MCF 10A (cell line): ENCODE measurements at regions of chr14 and their contacts with region 1.

Region 1: GRCh38 chr14:61573748-61574513 is 121.4 kb upstream of the HIF1A start:
- DNase-seq: peak; percentile 87
- H3K4me3 Mint-ChIP-seq: peak overlapping the region; percentile 31
- H3K27ac Mint-ChIP-seq: peak overlapping the region; percentile 91
- H3K4me1 Mint-ChIP-seq: peaks cover 42% of the 10 kb centered on the region
- H3K27me3 Mint-ChIP-seq: no peaks in the 10 kb centered on the region
- CTCF ChIP-seq: no peak

Region 2: GRCh38 chr14:60963761-60964160 is 610.2 kb before region 1 on chr14:
- CTCF ChIA-PET with region 1: no interaction called
- POLR2A ChIA-PET with region 1: no interaction called
- intact Hi-C with region 1: no loop called
- DNase-seq: no peak
- H3K4me3 Mint-ChIP-seq: no peak overlapping the region
- H3K27ac Mint-ChIP-seq: no peak overlapping the region
- H3K4me1 Mint-ChIP-seq: no peaks in the 10 kb centered on the region
- H3K27me3 Mint-ChIP-seq: no peaks in the 10 kb centered on the region
- CTCF ChIP-seq: no peak

Region 3: DNA sequence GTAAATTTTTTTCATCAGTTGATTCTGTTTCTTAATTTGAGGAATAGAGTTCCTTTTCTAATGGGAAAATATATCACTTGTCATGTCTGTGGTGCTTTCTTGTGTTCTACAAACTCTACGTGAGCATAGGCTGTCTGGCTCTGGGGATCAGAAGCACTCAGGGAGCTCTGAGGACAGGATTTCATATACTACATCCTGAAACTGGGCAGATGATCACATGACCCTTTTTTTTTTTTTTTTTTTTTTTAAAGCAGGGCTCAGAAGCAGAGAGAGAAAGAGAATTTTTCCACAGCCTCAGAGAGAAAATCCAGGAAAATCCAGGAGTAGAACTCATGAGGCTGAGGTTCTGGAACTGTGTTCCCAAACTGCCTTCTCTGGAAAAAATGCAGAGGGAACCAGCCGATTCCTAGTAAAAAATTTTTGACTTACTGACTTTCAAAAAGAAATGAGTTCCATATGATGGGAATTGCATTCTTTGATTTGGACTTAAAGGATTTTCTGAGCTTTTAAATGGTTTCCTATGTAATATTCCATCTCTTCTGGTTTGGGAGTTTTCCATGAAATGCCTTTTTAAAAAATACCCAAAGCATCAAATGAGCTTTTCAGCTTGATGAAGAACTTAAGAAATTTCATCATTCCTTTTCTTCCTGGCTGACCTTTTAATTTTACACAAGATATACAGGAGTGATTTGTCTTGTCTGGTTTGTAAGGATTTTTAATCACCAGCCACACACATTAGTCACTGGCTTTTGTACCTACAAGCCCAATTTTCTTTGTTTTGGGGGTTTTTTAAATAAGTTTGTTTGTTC is 61.7 kb before region 1 on chr14:
- CTCF ChIA-PET with region 1: no interaction called
- POLR2A ChIA-PET with region 1: interaction called, 21 read pairs
- intact Hi-C with region 1: no loop called
- DNase-seq: peak; percentile 83
- H3K4me3 Mint-ChIP-seq: peak overlapping the region; percentile 38
- H3K27ac Mint-ChIP-seq: peak overlapping the region; percentile 61
- H3K4me1 Mint-ChIP-seq: peaks cover 19% of the 10 kb centered on the region
- H3K27me3 Mint-ChIP-seq: no peaks in the 10 kb centered on the region
- CTCF ChIP-seq: no peak

Region 4: DNA sequence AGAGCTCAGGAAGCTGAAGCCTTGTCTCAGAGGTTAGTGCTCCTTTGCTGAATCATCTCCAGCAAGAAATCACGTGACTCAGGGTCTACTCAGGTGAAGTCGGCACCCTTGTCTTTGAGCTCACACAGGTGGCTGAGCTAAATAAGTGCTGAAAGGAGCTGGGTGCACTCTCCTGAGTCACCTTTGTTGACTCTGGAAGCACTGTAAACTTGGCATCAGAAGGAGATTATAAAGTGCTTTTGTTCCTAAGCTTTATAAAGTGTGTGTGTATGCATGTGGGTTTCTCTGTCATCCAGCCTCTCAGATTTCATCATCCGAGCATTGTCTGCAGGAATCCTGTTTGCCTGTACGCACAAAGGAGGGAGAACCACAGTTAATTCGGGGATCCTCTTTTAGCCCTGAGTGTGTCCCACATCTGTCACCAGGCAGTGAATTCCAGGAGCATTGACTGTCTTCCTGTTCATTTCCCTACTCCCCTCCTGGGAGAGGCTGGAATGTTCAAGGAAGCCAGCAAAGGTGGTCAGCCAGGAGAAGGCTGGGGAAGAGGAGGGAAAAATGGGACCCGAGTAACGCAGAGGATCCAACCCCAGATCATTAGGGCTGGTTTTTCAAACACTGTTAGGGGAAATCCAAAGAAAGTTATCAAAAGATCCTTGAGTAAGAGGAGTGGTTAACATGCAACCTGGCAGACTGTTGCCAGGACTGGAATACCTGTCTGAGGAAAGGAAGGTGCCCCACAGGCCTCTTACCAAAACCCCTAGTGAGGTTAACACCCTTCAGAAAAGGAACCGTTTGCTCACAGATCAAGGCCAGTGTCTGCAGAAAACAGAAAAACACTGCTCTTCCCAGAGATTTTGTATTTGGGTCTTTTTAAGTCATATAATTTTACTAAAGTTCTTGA is 36.1 kb before region 1 on chr14:
- CTCF ChIA-PET with region 1: interaction called, 3 read pairs
- POLR2A ChIA-PET with region 1: interaction called, 21 read pairs
- intact Hi-C with region 1: no loop called
- DNase-seq: peak; percentile 97
- H3K4me3 Mint-ChIP-seq: peak overlapping the region; percentile 10
- H3K27ac Mint-ChIP-seq: peak overlapping the region; percentile 88
- H3K4me1 Mint-ChIP-seq: peaks cover 32% of the 10 kb centered on the region
- H3K27me3 Mint-ChIP-seq: no peaks in the 10 kb centered on the region
- CTCF ChIP-seq: no peak

Region 5: DNA sequence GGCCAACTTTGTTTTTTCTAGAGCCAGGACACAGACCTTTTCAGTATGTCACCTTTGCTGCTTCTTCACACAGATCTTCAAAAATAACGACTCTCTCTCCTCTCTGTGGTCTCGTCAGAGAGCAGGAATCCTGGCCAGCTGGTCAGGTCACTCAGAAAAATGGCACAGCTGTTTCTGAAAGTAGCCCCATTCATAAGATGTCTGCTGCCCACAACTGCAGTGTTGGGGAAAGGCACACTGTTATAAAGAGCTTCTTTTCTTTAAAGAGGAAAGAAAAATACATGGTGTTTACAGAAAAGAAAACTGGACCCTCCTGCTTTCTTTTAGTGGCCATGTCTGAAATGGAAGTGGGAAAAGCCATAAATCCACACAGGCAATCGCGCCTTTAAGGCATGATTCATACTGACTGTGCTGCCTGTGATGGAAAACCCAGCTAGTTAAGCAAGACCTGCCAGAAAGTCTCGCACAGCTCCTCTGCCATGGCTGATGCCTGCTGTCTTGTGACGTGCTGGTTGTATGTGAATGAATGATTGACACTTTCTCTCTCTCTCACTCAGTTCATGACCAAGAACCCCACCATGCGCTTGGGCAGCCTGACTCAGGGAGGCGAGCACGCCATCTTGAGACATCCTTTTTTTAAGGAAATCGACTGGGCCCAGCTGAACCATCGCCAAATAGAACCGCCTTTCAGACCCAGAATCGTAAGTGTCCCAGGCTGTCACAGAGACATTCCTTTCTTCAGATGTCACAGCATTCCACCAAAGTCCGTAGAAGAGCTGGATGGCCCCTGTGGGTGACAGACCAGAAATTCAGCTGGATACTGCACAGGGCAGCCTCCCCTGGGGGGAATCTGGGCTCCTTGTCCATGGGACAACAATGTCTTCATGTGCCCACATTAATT is 26.5 kb before region 1 on chr14:
- CTCF ChIA-PET with region 1: interaction called, 3 read pairs
- POLR2A ChIA-PET with region 1: interaction called, 13 read pairs
- intact Hi-C with region 1: no loop called
- DNase-seq: peak; percentile 86
- H3K4me3 Mint-ChIP-seq: no peak overlapping the region
- H3K27ac Mint-ChIP-seq: peak overlapping the region; percentile 69
- H3K4me1 Mint-ChIP-seq: peaks cover 20% of the 10 kb centered on the region
- H3K27me3 Mint-ChIP-seq: no peaks in the 10 kb centered on the region
- CTCF ChIP-seq: no peak

Region 6: GRCh38 chr14:61585598-61586543 is 11.9 kb after region 1 on chr14:
- CTCF ChIA-PET with region 1: interaction called, 3 read pairs
- POLR2A ChIA-PET with region 1: interaction called, 37 read pairs
- intact Hi-C with region 1: no loop called
- DNase-seq: peak; percentile 77
- H3K4me3 Mint-ChIP-seq: no peak overlapping the region
- H3K27ac Mint-ChIP-seq: peak overlapping the region; percentile 65
- H3K4me1 Mint-ChIP-seq: peaks cover 35% of the 10 kb centered on the region
- H3K27me3 Mint-ChIP-seq: no peaks in the 10 kb centered on the region
- CTCF ChIP-seq: no peak

Region 7: DNA sequence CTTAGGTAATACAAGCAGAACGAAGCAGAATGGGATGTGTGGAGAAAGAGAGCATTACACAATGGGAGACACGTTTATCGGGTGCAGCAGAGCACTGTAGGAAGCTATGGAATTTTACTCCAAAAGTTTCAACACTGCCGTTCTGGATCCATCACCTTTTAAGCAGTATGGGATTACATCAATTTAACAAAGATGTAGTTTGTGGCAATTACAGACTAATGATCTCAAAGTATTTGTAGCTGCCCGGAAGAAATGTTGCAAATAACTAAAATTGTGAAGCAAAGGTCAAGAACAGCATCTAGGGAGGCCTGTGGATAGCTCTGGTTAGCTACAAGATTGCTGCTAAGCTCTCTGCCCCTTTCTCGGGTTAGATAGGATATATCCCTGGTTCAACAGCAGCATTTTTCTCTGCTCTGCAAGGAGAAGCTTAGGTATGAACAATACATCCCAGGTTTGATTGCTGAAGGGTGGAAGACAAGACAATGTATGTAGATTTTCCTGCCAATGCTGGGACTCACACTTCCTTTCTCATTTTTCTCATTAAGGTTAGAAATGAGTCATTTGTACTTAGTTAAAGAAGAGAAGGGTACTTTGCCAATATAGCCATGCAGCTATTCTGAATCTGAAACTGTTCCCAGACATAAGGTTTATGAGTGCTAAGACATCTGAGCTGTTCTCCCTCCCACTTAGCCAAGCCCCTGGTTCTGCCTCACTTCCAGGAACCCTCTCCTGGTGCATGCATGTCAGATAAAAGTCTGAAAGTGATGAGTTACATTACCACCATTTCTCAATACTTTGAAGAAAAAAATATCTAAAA is 46.4 kb after region 1 on chr14:
- CTCF ChIA-PET with region 1: no interaction called
- POLR2A ChIA-PET with region 1: interaction called, 16 read pairs
- intact Hi-C with region 1: no loop called
- DNase-seq: peak; percentile 90
- H3K4me3 Mint-ChIP-seq: no peak overlapping the region
- H3K27ac Mint-ChIP-seq: peak overlapping the region; percentile 69
- H3K4me1 Mint-ChIP-seq: peaks cover 30% of the 10 kb centered on the region
- H3K27me3 Mint-ChIP-seq: no peaks in the 10 kb centered on the region
- CTCF ChIP-seq: no peak

Region 8: GRCh38 chr14:61671082-61671481 is 97.2 kb after region 1 on chr14:
- CTCF ChIA-PET with region 1: no interaction called
- POLR2A ChIA-PET with region 1: no interaction called
- intact Hi-C with region 1: no loop called
- DNase-seq: no peak
- H3K4me3 Mint-ChIP-seq: no peak overlapping the region
- H3K27ac Mint-ChIP-seq: no peak overlapping the region
- H3K4me1 Mint-ChIP-seq: no peaks in the 10 kb centered on the region
- H3K27me3 Mint-ChIP-seq: no peaks in the 10 kb centered on the region
- CTCF ChIP-seq: no peak

Region 9: DNA sequence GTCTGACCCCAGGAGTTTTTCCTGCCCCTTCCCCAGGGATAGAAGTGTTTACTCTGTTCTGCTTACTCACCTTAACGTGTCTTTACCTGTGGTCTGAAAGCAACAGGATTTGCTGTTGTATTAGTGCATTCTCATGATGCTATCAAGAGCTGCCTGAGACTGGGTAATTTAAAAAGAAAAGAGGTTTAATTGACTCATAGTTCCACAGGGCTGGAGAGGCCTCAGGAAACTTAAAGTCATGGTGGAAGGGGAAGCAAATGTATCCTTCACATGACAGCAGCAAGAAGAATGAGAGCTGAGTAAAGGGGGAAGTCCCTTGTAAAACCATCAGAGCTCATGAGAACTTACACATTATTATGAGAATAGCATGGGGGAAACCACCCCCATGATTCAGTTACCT is 428.7 kb after region 1 on chr14:
- CTCF ChIA-PET with region 1: no interaction called
- POLR2A ChIA-PET with region 1: no interaction called
- intact Hi-C with region 1: no loop called
- DNase-seq: peak; percentile 32
- H3K4me3 Mint-ChIP-seq: no peak overlapping the region
- H3K27ac Mint-ChIP-seq: no peak overlapping the region
- H3K4me1 Mint-ChIP-seq: peaks cover 20% of the 10 kb centered on the region
- H3K27me3 Mint-ChIP-seq: no peaks in the 10 kb centered on the region
- CTCF ChIP-seq: no peak